Activated T-helper 2 cell treated with anti-CD3 and anti-CD28 coated beads, Interferon-gamma antibody, Interleukin-2, Interleukin-4, amounts not matched to agents 10 μg/mL and 5 μg/mL and 100 μg/mL, durations not matched to agents 14 hours and 24 hours and 36 hours (primary cell): ENCODE measurements at regions of chr19 and their contacts with region 1.

Region 1: GRCh38 chr19:35269421-35270117 is 807 bp downstream of the USF2 start:
- DNase-seq: peak; percentile 76
- H3K4me3 Mint-ChIP-seq: peak overlapping the region; percentile 72
- H3K27ac Mint-ChIP-seq: peak overlapping the region; percentile 67
- H3K4me1 Mint-ChIP-seq: peaks cover 12% of the 10 kb centered on the region
- H3K27me3 Mint-ChIP-seq: no peaks in the 10 kb centered on the region

Region 2: GRCh38 chr19:35140962-35141637 is 128.5 kb before region 1 on chr19:
- intact Hi-C with region 1: loop called (anchors 5 kb)
- DNase-seq: peak; percentile 88
- H3K4me3 Mint-ChIP-seq: peak overlapping the region; percentile 74
- H3K27ac Mint-ChIP-seq: peak overlapping the region; percentile 59
- H3K4me1 Mint-ChIP-seq: peaks cover 21% of the 10 kb centered on the region
- H3K27me3 Mint-ChIP-seq: peaks cover 29% of the 10 kb centered on the region

Region 3: GRCh38 chr19:35154525-35155406 is 114.8 kb before region 1 on chr19 and contains the start of gene FXYD5:
- intact Hi-C with region 1: loop called (anchors 2 kb)
- DNase-seq: peak; percentile 54
- H3K4me3 Mint-ChIP-seq: peak within 1 kb of the TSS; percentile 100
- H3K27ac Mint-ChIP-seq: peak within 1 kb of the TSS; percentile 100
- H3K4me1 Mint-ChIP-seq: peaks cover 37% of the 10 kb centered on the region
- H3K27me3 Mint-ChIP-seq: peaks cover 6% of the 10 kb centered on the region
- total RNA-seq, gene FXYD5: 257 and 271 TPM in 2 replicates

Region 4: DNA sequence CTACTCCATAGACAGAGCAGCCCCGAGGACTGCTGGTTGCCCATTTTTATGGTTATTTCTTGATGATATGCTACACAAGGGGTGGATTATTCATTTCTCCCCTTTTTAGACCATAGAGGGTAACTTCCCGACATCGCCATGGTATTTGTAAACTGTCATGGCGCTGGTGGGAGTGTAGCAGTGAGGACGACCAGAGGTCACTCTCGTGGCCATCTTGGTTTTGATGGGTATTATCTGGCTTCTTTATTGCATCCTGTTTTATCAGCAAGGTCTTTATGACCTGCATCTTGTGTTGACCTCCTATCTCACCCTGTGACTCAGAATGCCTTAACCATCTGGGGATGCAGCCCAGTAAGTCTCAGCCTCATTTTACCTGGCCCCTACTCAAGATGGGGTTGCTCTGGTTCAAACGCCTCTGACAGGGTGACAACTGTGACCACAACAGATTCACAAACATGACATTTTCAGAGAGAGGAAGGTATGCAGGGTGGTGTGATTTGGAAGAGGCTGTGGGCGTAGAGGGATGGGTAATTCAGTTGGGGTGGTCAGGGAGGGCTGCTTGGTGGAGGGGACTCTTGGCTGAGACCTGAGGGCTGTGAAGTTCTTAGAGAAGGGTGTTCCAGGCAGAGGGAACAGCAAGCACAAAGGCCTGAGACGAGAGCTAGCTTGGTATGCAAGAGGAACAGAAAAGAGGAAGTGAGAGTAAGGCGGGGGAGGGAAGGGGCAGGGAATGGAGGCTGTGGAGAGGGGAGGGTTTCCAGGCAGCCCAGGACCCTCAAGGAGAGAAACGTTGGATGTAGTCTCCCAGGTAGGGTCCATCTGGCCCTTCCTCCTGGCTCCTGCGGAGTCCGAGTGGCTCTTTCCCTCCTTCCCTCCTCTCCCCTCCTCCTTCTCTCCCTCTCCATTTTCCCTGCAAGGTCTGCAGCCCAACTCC is 64.5 kb before region 1 on chr19:
- intact Hi-C with region 1: loop called (anchors 5 kb)
- DNase-seq: no peak
- H3K4me3 Mint-ChIP-seq: no peak overlapping the region
- H3K27ac Mint-ChIP-seq: peak overlapping the region; percentile 91
- H3K4me1 Mint-ChIP-seq: peaks cover 56% of the 10 kb centered on the region
- H3K27me3 Mint-ChIP-seq: no peaks in the 10 kb centered on the region

Region 5: GRCh38 chr19:35295792-35296462 is 26.4 kb after region 1 on chr19:
- intact Hi-C with region 1: no loop called
- DNase-seq: no peak
- H3K4me3 Mint-ChIP-seq: no peak overlapping the region
- H3K27ac Mint-ChIP-seq: no peak overlapping the region
- H3K4me1 Mint-ChIP-seq: no peaks in the 10 kb centered on the region
- H3K27me3 Mint-ChIP-seq: peaks cover 2% of the 10 kb centered on the region

Region 6: DNA sequence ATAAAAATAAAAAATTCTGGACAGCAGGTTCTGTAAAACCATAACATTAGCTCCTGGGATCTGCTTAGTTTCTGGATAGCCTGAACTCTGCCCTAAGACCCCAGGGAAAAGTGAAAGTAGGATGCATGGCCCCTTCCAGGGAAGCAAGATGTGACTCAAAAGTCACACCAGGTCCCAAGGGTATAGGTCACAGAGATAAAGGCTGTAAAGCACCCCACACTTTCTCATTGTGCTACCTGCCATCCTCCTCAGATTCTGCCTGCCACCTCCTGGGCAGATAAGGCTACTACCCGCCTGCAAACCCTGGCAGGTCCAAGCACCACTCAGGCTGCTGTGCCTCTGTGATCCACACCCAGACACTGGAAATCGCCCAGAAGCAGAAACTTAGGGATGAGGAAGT is 199.1 kb after region 1 on chr19:
- intact Hi-C with region 1: no loop called
- DNase-seq: peak; percentile 47
- H3K4me3 Mint-ChIP-seq: no peak overlapping the region
- H3K27ac Mint-ChIP-seq: no peak overlapping the region
- H3K4me1 Mint-ChIP-seq: peaks cover 14% of the 10 kb centered on the region
- H3K27me3 Mint-ChIP-seq: peaks cover 4% of the 10 kb centered on the region